K562 (cell line): ENCODE measurements at regions of chr5 and their contacts with region 1.

Region 1: GRCh38 chr5:122156724-122157325 is 27.5 kb downstream of the ZNF474 start:
- DNase-seq: peak in 3 of 4 experiments; percentile 26 to 71 (median 64)
- ATAC-seq: peak; percentile 80
- H3K4me3 ChIP-seq: no peak overlapping the region
- H3K27ac ChIP-seq: no peak overlapping the region
- H3K4me1 ChIP-seq: peaks cover 4 to 14% of the 10 kb centered on the region in 2 experiments; a peak in 3 of 5 replicates
- H3K27me3 ChIP-seq: no peaks in the 10 kb centered on the region
- CTCF ChIP-seq: peak; percentile 43 to 70 (median 51); a peak in 5 of 6 replicates
- EP300 ChIP-seq: no peak
- POLR2A ChIP-seq: no peak
- RAD21 ChIP-seq: peak; percentile 70 to 91

Region 2: GRCh38 chr5:121805911-121806310 is 350.9 kb before region 1 on chr5:
- CTCF ChIA-PET with region 1: no interaction called
- POLR2A ChIA-PET with region 1: no interaction called
- in situ Hi-C with region 1: no loop called
- intact Hi-C with region 1: no loop called
- DNase-seq: no peak
- ATAC-seq: no peak
- H3K4me3 ChIP-seq: no peak overlapping the region
- H3K27ac ChIP-seq: no peak overlapping the region
- H3K4me1 ChIP-seq: no peaks in the 10 kb centered on the region
- H3K27me3 ChIP-seq: no peaks in the 10 kb centered on the region
- CTCF ChIP-seq: no peak
- EP300 ChIP-seq: no peak
- POLR2A ChIP-seq: no peak
- RAD21 ChIP-seq: no peak

Region 3: DNA sequence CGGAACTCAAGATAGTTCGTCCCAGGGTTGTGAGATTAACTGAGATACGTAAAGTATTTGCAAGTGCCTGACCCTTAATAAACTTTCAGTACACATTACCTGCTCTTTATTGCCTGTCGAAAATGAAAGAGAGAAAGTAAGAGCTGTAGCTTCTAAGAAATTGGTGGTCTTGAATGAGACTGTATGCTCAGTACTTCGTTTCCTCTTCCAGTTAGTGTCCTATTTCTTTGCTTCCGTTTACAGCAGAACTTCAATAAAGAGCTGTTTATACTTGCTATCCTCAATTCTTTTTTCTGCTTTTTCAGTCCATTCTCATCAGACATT is 194.5 kb before region 1 on chr5:
- CTCF ChIA-PET with region 1: no interaction called
- POLR2A ChIA-PET with region 1: no interaction called
- in situ Hi-C with region 1: no loop called
- intact Hi-C with region 1: loop called (anchors 2 kb)
- DNase-seq: no peak
- ATAC-seq: peak; percentile 21
- H3K4me3 ChIP-seq: peak overlapping the region; percentile 57
- H3K27ac ChIP-seq: peak overlapping the region; percentile 85
- H3K4me1 ChIP-seq: peaks cover 0 to 3% of the 10 kb centered on the region in 2 experiments; a peak in 1 of 5 replicates
- H3K27me3 ChIP-seq: no peaks in the 10 kb centered on the region
- CTCF ChIP-seq: no peak
- EP300 ChIP-seq: no peak
- POLR2A ChIP-seq: no peak
- RAD21 ChIP-seq: no peak

Region 4: DNA sequence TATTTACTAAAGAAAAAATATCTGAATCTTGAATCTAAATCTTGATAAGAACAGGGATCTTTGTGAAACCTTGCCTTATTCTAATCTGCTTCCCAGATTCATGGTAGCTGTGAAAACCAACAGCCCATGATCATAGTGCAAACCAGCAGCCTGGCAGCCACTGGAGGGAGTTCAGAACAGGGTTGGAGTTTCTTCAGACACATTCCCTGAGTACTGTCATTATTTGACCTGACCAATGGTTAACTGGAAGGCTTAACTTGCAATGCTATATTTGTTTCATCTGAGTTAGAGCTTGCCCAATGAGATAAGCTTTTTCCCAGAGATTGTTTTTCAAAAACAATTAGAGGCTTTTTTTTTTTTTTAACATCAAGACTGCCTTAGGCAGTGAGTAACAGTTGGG is 126.6 kb before region 1 on chr5:
- CTCF ChIA-PET with region 1: interaction called, 5 read pairs
- POLR2A ChIA-PET with region 1: no interaction called
- in situ Hi-C with region 1: no loop called
- intact Hi-C with region 1: loop called (anchors 5 kb)
- DNase-seq: peak in 1 of 4 experiments; percentile 3
- ATAC-seq: peak; percentile 64
- H3K4me3 ChIP-seq: no peak overlapping the region
- H3K27ac ChIP-seq: no peak overlapping the region
- H3K4me1 ChIP-seq: no peaks in the 10 kb centered on the region; a peak in 1 of 5 replicates
- H3K27me3 ChIP-seq: no peaks in the 10 kb centered on the region
- CTCF ChIP-seq: no peak
- EP300 ChIP-seq: no peak
- POLR2A ChIP-seq: no peak
- RAD21 ChIP-seq: no peak

Region 5: DNA sequence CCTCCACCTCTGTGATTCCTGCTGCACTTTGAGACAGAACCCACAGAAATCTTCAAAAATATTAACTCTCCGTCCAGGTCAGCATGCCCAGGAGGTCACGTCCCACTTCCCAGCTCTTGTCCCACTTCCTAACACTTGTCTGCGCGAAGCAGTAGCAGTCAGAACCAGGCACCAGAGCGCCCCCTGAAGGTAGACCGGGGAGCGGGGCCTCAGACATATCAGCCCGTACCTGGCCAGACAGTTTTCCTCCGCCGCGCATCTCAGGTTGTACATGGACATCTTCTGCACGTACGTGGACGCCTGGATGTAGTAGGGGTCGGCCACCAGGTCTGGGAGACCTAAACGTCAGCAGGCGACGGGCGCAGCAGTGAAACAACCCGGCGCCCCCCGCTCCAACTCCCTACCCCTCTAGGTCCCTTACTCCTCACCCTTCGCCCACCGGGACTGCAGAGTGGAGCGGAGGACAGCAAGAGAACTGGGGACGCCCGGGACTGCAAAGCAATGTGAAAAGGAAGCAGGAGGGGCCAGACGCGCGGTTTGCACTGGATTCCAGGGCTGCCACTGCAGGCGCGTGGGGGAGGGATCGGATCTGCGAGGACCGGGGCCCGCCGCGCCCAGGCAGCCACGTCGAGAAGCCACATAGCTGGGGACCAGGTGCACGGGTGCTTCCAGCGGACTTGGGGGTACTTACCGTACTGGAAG is 80.0 kb before region 1 on chr5:
- CTCF ChIA-PET with region 1: no interaction called
- POLR2A ChIA-PET with region 1: no interaction called
- in situ Hi-C with region 1: no loop called
- intact Hi-C with region 1: no loop called
- DNase-seq: no peak
- ATAC-seq: no peak
- H3K4me3 ChIP-seq: no peak overlapping the region
- H3K27ac ChIP-seq: no peak overlapping the region
- H3K4me1 ChIP-seq: no peaks in the 10 kb centered on the region
- H3K27me3 ChIP-seq: no peaks in the 10 kb centered on the region
- CTCF ChIP-seq: 0 out of 6 replicates have a peak, but pooled peaks of 1 of the 3 experiments have one; percentile 12
- EP300 ChIP-seq: no peak
- POLR2A ChIP-seq: no peak
- RAD21 ChIP-seq: no peak

Region 6: GRCh38 chr5:122091936-122092600 is 64.8 kb before region 1 on chr5:
- CTCF ChIA-PET with region 1: interaction called, 20 read pairs
- POLR2A ChIA-PET with region 1: no interaction called
- in situ Hi-C with region 1: no loop called
- intact Hi-C with region 1: loop called (anchors 1 kb)
- DNase-seq: peak in 2 of 4 experiments; percentile 39 to 61
- ATAC-seq: peak; percentile 81
- H3K4me3 ChIP-seq: no peak overlapping the region
- H3K27ac ChIP-seq: no peak overlapping the region
- H3K4me1 ChIP-seq: no peaks in the 10 kb centered on the region; a peak in 2 of 5 replicates
- H3K27me3 ChIP-seq: no peaks in the 10 kb centered on the region
- CTCF ChIP-seq: peak; percentile 39 to 76 (median 64); a peak in 5 of 6 replicates
- EP300 ChIP-seq: no peak
- POLR2A ChIP-seq: no peak
- RAD21 ChIP-seq: peak; percentile 49 to 81; a peak in 3 of 4 replicates

Region 7: DNA sequence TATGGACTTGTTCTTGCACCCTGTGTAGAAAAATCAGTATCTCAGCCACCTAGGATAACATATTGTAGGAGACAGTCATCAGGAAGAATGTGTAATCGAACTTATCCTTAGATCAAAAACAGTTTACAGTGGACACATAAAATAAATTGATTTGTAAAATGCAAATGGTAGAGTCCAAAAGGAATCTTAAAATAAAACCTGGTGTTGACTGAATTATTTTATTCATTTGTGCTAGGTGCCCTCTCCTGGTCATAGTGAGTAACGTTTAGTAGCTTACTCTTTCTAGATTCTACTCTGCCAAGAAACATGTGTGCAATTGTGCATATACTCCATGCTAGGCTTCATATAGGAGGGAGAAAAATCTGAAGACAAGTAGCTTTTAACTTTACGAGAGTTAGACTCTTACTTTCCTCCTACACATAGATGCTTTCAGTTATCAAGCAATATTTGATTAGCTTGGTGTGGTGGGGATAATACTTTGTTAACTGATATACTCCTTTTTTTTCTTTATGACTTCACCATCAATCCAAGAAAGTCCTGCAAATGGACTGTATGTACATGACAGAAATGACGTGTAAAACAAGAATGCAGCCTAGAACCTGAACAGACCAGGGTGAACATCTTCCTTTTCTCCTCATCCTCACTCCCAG is 55.1 kb before region 1 on chr5:
- CTCF ChIA-PET with region 1: no interaction called
- POLR2A ChIA-PET with region 1: no interaction called
- in situ Hi-C with region 1: loop called (anchors 5 kb)
- intact Hi-C with region 1: loop called (anchors 2 kb)
- DNase-seq: peak; percentile 29 to 57 (median 34)
- ATAC-seq: peak; percentile 82
- H3K4me3 ChIP-seq: no peak overlapping the region
- H3K27ac ChIP-seq: no peak overlapping the region
- H3K4me1 ChIP-seq: peaks cover 6 to 13% of the 10 kb centered on the region in 2 experiments; a peak in 3 of 5 replicates
- H3K27me3 ChIP-seq: no peaks in the 10 kb centered on the region
- CTCF ChIP-seq: peak; percentile 33 to 66 (median 49); a peak in 5 of 6 replicates
- EP300 ChIP-seq: no peak
- POLR2A ChIP-seq: no peak
- RAD21 ChIP-seq: peak; percentile 38 to 67

Region 8: GRCh38 chr5:122111460-122111859 is 45.4 kb before region 1 on chr5:
- CTCF ChIA-PET with region 1: no interaction called
- POLR2A ChIA-PET with region 1: no interaction called
- in situ Hi-C with region 1: loop called (anchors 5 kb)
- intact Hi-C with region 1: loop called (anchors 1 kb)
- DNase-seq: peak in 1 of 4 experiments; percentile 18
- ATAC-seq: no peak
- H3K4me3 ChIP-seq: no peak overlapping the region
- H3K27ac ChIP-seq: peak overlapping the region; percentile 98; the same call in 2 of the 3 replicates
- H3K4me1 ChIP-seq: peaks cover 5 to 34% of the 10 kb centered on the region in 2 experiments; a peak in 4 of 5 replicates
- H3K27me3 ChIP-seq: no peaks in the 10 kb centered on the region
- CTCF ChIP-seq: no peak
- EP300 ChIP-seq: no peak
- POLR2A ChIP-seq: no peak
- RAD21 ChIP-seq: no peak

Region 9: DNA sequence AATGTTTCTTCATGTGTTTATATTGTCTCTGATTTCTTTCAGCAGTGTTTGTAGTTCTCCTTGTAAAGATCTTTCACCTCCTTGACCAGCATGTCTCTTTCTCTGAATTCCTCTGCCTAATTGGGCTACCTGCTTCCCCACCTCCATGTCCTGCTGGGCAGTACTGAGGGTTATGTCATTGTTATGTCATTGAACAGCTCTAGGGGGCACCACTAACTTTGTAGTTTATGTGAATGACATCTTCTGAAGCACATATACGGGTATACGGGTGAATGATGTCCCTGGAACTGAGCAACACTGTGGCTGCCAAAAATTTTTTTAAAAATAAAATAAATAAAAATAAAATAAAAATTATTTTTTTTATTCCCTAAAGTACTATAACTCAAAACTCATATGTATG is 138.3 kb after region 1 on chr5:
- CTCF ChIA-PET with region 1: no interaction called
- POLR2A ChIA-PET with region 1: no interaction called
- in situ Hi-C with region 1: no loop called
- intact Hi-C with region 1: no loop called
- DNase-seq: peak; percentile 12 to 22 (median 18)
- ATAC-seq: peak; percentile 85
- H3K4me3 ChIP-seq: no peak overlapping the region
- H3K27ac ChIP-seq: no peak overlapping the region
- H3K4me1 ChIP-seq: no peaks in the 10 kb centered on the region
- H3K27me3 ChIP-seq: no peaks in the 10 kb centered on the region
- CTCF ChIP-seq: peak; percentile 20 to 33 (median 27); a peak in 2 of 6 replicates
- EP300 ChIP-seq: no peak
- POLR2A ChIP-seq: no peak
- RAD21 ChIP-seq: no peak

Region 10: DNA sequence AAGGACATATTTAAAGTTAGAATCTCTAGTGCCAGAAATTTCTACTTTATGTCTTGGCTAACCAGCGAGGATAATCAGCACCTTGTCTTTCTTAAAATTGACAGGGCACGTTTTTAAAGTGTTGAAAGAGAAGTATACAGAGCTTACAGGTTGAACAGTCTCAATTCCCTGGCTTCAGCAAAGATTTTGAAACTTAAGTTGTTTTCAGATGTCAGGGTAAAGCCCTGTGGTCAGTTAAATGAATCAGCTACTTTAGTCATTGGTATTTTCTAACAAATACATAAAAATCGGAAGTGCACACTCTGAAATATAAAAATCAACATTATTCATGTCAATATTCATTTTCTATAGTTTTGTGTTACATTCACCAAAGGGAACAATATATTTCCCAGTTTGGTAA is 184.3 kb after region 1 on chr5:
- CTCF ChIA-PET with region 1: no interaction called
- POLR2A ChIA-PET with region 1: no interaction called
- in situ Hi-C with region 1: no loop called
- intact Hi-C with region 1: no loop called
- DNase-seq: no peak
- ATAC-seq: no peak
- H3K4me3 ChIP-seq: no peak overlapping the region
- H3K27ac ChIP-seq: no peak overlapping the region
- H3K4me1 ChIP-seq: no peaks in the 10 kb centered on the region
- H3K27me3 ChIP-seq: no peaks in the 10 kb centered on the region; a peak in 1 of 5 replicates
- CTCF ChIP-seq: no peak
- EP300 ChIP-seq: no peak
- POLR2A ChIP-seq: no peak
- RAD21 ChIP-seq: no peak